Heart right ventricle (tissue), 16 donors: ENCODE measurements at regions of chr6 and their contacts with region 1.

Region 1: GRCh38 chr6:3887150-3887700 is 38.1 kb downstream of the FAM50B start:
- DNase-seq: peak in 1 of 2 donors; percentile 29
- ATAC-seq: peak in 7 of 8 donors; percentile 10 to 49 (median 37)
- H3K4me3 ChIP-seq: no peak overlapping the region
- H3K27ac ChIP-seq: peak overlapping the region in 1 of 10 donors; percentile 26
- H3K4me1 ChIP-seq: peaks cover 17 to 57% (median 34%) of the 10 kb centered on the region in 9 donors
- H3K27me3 ChIP-seq: no peaks in the 10 kb centered on the region
- CTCF ChIP-seq: peak; percentile 30 to 73 (median 57)

Region 2: DNA sequence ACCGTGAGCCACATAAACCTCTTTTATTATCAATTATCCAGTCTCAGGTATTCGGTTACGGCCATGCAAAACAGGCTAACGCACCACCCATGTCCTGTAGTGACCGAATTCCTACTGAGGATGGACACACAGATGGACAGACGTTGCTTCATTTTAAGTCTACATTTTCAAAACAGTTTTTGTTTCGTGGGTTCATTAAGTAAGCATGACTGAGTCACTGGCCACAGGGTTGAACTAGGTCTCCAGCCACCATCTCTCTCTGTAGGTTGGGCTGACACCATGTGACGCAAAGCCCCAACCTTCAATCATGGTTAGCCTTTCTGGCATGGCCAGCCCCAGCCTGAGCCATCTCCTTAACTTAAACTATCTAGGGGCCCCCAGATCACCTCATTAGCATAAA is 320.4 kb before region 1 on chr6:
- intact Hi-C with region 1: no loop called
- DNase-seq: no peak
- ATAC-seq: no peak
- H3K4me3 ChIP-seq: no peak overlapping the region
- H3K27ac ChIP-seq: no peak overlapping the region
- H3K4me1 ChIP-seq: peaks cover 0 to 3% (median 0%) of the 10 kb centered on the region in 9 donors
- H3K27me3 ChIP-seq: peaks cover 0 to 10% (median 4%) of the 10 kb centered on the region in 7 donors
- CTCF ChIP-seq: no peak

Region 3: DNA sequence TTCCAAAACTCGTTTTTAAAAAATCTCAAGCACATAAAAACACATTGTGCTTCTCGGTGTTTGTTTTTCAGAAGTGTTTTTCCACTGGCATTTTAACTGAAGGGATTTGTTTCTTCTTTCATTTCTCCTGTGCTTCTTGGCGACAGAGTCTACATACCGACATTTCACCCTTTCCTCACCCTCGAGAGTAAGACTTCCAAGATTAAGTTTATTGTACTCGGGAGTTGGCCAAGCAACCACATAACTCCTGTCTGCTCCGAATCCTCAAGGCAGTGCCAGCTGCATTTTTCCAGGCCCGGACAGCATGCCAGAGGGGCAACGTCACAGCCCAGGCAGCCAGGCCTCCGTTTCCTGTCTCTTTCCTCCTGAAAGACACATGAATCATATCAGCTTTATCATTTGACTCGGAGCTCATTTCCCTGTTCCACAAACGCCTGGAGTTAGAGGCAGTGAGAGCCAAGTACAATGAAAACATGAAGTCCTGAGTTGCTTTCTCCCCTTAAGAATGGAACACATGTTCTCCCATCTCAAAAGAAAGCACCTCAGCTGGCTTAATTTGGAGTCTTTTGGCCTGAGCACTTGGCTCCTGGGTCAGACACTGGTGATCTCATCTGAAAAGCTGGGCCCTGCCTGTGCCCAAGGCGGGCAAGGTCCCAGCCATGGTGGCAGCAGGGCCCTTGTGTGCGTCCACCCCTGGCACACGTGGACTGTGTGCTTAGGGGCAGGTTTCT is 61.2 kb before region 1 on chr6:
- intact Hi-C with region 1: loop called in 1 of 10 experiments (anchors 10 kb)
- DNase-seq: peak; percentile 86 to 87
- ATAC-seq: peak; percentile 84 to 95 (median 93)
- H3K4me3 ChIP-seq: peak overlapping the region in 6 of 10 donors; percentile 8 to 36 (median 20)
- H3K27ac ChIP-seq: peak overlapping the region; percentile 75 to 92 (median 90)
- H3K4me1 ChIP-seq: peaks cover 10 to 44% (median 38%) of the 10 kb centered on the region in 9 donors
- H3K27me3 ChIP-seq: no peaks in the 10 kb centered on the region
- CTCF ChIP-seq: no peak

Region 4: DNA sequence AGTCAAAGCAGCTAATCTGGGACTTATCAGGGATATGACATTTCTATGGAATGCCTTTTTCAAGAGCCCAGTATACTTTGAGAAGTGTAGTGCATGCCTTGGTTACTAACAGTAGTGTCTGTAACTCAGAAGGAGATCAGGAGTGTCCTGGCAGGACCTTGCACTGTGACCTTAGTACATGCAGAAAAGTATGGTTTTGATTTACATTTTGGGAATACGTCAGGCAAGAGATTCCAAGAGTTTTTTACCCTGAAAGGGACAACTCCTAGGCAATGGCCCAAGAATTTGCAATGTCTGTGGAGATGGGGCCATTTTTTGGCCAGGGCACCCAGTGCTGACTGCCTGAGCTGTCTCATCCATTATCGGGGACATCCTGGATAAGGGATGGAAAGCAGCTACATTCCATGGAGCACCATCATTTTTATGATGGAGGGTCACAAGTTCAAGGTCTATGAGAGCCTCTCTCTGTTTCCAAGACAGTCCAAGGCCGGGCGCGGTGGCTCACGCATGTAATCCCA is 42.1 kb after region 1 on chr6:
- intact Hi-C with region 1: loop called in 7 of 10 experiments (anchors 2 to 10 kb)
- DNase-seq: no peak
- ATAC-seq: peak in 1 of 8 donors; percentile 50
- H3K4me3 ChIP-seq: no peak overlapping the region
- H3K27ac ChIP-seq: peak overlapping the region in 5 of 10 donors; percentile 5 to 56 (median 14)
- H3K4me1 ChIP-seq: peaks cover 0 to 40% (median 9%) of the 10 kb centered on the region in 9 donors
- H3K27me3 ChIP-seq: no peaks in the 10 kb centered on the region
- CTCF ChIP-seq: no peak

Region 5: GRCh38 chr6:3943331-3943765 is 56.1 kb after region 1 on chr6:
- intact Hi-C with region 1: loop called in 1 of 10 experiments (anchors 10 kb)
- DNase-seq: peak; percentile 43 to 49
- ATAC-seq: peak in 1 of 8 donors; percentile 14
- H3K4me3 ChIP-seq: no peak overlapping the region
- H3K27ac ChIP-seq: no peak overlapping the region
- H3K4me1 ChIP-seq: peaks cover 0 to 8% (median 0%) of the 10 kb centered on the region in 9 donors
- H3K27me3 ChIP-seq: peaks cover 0 to 31% (median 0%) of the 10 kb centered on the region in 7 donors
- CTCF ChIP-seq: no peak

Region 6: DNA sequence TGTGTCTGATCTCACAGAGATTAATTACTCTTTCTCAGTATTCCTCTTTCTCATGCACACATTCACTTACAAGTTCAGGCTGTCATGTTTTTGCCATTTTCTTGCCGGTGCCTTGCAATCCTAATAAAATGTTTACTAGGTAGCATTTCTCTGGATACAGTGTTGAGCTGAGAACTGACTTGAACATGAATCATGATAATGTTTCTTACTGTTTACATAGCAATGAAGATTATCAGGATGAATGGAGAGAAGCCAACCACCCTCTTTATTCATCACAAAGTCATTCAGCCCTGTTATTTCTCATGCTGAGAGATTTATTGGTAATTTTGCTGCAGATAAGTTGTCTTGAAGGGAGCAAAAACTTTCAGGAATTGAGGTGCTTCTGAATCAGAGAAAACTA is 433.6 kb after region 1 on chr6:
- intact Hi-C with region 1: no loop called
- DNase-seq: no peak
- ATAC-seq: peak in 1 of 8 donors; percentile 36
- H3K4me3 ChIP-seq: no peak overlapping the region
- H3K27ac ChIP-seq: peak overlapping the region in 7 of 10 donors; percentile 3 to 78 (median 54)
- H3K4me1 ChIP-seq: peaks cover 11 to 67% (median 51%) of the 10 kb centered on the region in 9 donors
- H3K27me3 ChIP-seq: no peaks in the 10 kb centered on the region
- CTCF ChIP-seq: no peak